Activated CD4-positive, alpha-beta memory T cell treated with anti-CD3 and anti-CD28 coated beads for 36 hours (primary cell): ENCODE measurements at regions of chr12 and their contacts with region 1.

Region 1: DNA sequence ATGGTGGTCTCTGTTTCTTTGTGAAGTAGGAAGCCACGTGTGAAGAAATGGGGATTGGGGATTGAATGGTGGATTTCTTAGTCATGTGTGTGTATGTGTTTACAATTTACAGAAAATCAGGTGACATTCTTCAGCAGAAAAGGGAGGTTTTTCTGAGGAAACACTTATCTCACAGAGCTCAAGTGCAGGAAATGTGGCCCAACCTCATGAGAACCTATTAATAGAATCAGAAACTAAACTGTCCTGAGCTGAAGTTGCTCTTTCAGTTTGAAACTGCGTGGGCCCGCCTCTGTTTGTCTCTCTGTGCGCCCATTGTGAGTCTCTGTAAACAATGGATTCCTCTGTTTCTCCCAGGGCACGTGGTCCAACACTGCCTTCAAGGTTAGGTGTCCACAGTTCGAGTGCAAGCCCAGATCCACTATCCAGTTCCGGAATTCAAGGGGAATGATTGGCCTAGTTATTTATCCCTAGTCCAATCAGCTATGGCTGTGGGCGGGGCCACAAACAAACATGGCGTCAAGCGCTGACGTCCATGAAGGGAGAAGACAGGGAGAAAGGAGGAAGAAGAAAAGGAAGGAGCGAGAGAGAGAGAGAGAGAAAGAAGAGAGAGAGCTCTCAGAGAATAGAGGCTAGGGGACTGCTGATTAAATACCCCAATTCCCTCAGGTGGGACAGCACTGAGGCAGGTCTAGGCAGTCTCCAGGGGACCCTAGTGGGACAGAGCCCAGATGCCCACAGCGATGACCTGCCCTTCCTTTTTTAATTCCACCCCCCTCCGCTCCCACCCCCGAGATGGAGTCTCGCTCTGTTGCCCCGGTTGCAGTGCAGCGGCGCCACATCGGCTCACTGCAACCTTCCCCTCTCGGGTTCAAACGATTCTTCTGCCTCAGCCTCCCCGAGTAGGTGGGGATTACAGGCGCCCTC is 31.4 kb upstream of the C12orf76 start:
- DNase-seq: peak; percentile 85
- H3K4me3 Mint-ChIP-seq: peak overlapping the region; percentile 40
- H3K27ac Mint-ChIP-seq: peak overlapping the region; percentile 97
- H3K4me1 Mint-ChIP-seq: peaks cover 31% of the 10 kb centered on the region
- H3K27me3 Mint-ChIP-seq: no peaks in the 10 kb centered on the region

Region 2: DNA sequence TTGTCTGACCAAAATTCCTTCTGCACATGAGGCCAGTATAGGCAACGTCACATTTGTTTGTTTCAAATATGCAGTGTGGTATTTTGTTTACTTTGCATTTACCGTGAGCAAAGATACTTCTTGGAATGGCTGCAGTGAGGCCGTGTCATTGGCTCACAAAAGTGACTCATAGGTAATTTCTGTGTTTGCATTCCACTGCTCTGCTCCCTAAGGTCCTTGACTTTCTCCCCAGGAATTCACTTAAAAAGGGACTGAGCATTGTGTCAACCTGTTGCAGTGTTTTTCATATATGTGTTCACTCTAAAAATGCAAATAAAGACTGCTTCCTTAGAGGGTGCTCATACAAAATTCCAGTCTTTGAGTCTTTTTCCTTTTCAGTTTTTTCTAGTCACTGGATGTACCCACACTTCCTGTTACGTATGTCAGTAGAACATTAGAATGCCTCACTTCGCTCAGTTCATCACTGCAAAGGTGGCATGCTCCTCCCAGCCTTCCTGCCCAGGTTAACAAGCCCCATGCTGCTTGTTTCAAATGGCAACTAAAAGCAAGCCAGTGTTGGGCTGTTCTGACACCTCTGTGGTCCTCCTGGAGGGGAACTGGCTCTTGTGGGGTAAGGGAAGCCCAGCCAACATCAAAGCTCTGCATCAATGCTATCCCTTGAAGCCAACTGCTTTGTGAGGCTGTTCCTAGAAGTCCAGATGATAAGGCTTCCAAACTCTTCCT is 40.5 kb before region 1 on chr12:
- CTCF ChIA-PET with region 1: no interaction called
- POLR2A ChIA-PET with region 1: no interaction called
- intact Hi-C with region 1: loop called (anchors 1 kb)
- DNase-seq: peak; percentile 68
- H3K4me3 Mint-ChIP-seq: no peak overlapping the region
- H3K27ac Mint-ChIP-seq: peak overlapping the region; percentile 96
- H3K4me1 Mint-ChIP-seq: peaks cover 47% of the 10 kb centered on the region
- H3K27me3 Mint-ChIP-seq: no peaks in the 10 kb centered on the region

Region 3: DNA sequence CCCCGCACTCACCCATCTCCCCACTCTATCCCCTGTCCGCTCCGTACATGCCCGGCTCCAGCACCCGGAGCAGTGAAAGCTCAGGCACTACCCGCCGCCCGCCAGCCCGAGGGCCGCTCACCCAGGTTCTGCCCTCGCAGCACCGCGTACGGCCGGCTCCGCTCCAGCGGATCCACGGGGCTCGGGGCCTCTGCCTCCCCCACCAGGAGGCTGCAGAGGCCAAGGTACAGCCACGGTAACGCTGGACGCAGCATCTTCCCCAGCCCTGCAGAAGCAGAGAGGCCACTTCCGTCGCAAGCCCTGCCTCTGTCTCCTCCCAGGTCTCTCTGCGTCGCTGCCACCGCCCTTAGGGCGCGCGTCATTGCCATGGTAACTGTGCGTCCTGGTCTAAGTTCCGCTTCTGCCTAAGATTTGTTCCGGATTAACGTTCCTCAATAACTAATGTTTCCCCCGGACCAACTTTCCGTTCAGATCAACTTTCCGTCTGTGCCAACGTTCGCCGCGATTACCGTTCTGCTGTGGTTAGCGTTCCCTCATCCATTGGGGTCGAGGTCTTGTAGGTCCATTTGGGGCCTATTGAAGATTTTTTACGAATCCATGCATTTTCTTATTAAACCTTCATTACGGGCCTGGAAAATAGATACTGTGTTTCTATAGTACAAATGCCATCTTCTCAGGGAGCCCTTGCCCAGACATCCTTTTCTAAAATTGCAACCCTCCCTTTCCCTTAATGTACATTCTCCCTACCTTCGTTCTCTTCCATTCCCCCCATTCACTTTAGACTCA is 31.3 kb before region 1 on chr12 and contains the start of gene C12orf76:
- CTCF ChIA-PET with region 1: no interaction called
- POLR2A ChIA-PET with region 1: no interaction called
- intact Hi-C with region 1: loop called (anchors 1 kb)
- DNase-seq: peak; percentile 95
- H3K4me3 Mint-ChIP-seq: peak within 1 kb of the TSS; percentile 89
- H3K27ac Mint-ChIP-seq: peak within 1 kb of the TSS; percentile 94
- H3K4me1 Mint-ChIP-seq: peaks cover 38% of the 10 kb centered on the region
- H3K27me3 Mint-ChIP-seq: no peaks in the 10 kb centered on the region
- total RNA-seq, gene C12orf76: 14.2 to 17.1 TPM

Region 4: GRCh38 chr12:110056147-110056484 is 23.6 kb before region 1 on chr12:
- CTCF ChIA-PET with region 1: no interaction called
- POLR2A ChIA-PET with region 1: interaction called, 5 read pairs
- intact Hi-C with region 1: loop called (anchors 1 kb)
- DNase-seq: no peak
- H3K4me3 Mint-ChIP-seq: no peak overlapping the region
- H3K27ac Mint-ChIP-seq: peak overlapping the region; percentile 52
- H3K4me1 Mint-ChIP-seq: peaks cover 45% of the 10 kb centered on the region
- H3K27me3 Mint-ChIP-seq: no peaks in the 10 kb centered on the region

Region 5: GRCh38 chr12:110065540-110065939 is 14.2 kb before region 1 on chr12:
- CTCF ChIA-PET with region 1: no interaction called
- POLR2A ChIA-PET with region 1: interaction called, 5 read pairs
- intact Hi-C with region 1: loop called (anchors 2 kb)
- DNase-seq: peak; percentile 36
- H3K4me3 Mint-ChIP-seq: no peak overlapping the region
- H3K27ac Mint-ChIP-seq: no peak overlapping the region
- H3K4me1 Mint-ChIP-seq: peaks cover 14% of the 10 kb centered on the region
- H3K27me3 Mint-ChIP-seq: no peaks in the 10 kb centered on the region

Region 6: DNA sequence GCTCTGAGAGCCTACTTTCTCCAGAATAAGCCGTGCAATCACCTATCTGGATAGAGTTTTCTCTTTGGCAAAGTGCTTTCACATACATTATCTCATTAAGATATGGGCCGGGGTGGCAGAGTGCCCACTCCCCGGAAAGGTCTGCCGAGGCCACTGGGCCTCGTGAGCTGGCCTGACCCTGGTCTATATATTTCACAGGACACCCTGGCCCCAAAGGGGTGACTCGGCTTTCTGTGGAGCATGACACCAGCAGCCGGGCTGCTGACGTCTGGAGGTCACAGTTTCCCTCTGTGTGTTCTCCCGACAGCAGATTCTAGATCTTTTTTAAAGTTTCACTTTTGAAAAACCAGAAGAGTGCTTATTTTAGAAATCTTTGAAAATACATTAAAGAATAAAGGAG is 173.4 kb after region 1 on chr12:
- CTCF ChIA-PET with region 1: no interaction called
- POLR2A ChIA-PET with region 1: no interaction called
- intact Hi-C with region 1: no loop called
- DNase-seq: no peak
- H3K4me3 Mint-ChIP-seq: no peak overlapping the region
- H3K27ac Mint-ChIP-seq: no peak overlapping the region
- H3K4me1 Mint-ChIP-seq: no peaks in the 10 kb centered on the region
- H3K27me3 Mint-ChIP-seq: no peaks in the 10 kb centered on the region